ENCODE measurements at regions of chr10 and their contacts with region 1.

Region 1: GRCh38 chr10:110864662-110865140 is 7.0 kb upstream of the PDCD4 start:
- DNase-seq: peak; percentile 65
- ATAC-seq: peak; percentile 69
- H3K4me3 Mint-ChIP-seq: peak overlapping the region; percentile 67
- H3K27ac Mint-ChIP-seq: peak overlapping the region; percentile 96
- H3K4me1 Mint-ChIP-seq: peaks cover 96% of the 10 kb centered on the region
- H3K27me3 Mint-ChIP-seq: no peaks in the 10 kb centered on the region
- CTCF ChIP-seq: no peak

Region 2: GRCh38 chr10:110774069-110775019 is 90.4 kb before region 1 on chr10:
- CTCF ChIA-PET with region 1: interaction called, 5 read pairs
- POLR2A ChIA-PET with region 1: interaction called, 5 read pairs
- intact Hi-C with region 1: loop called (anchors 5 kb)
- DNase-seq: peak; percentile 78
- ATAC-seq: peak; percentile 91
- H3K4me3 Mint-ChIP-seq: peak overlapping the region; percentile 50
- H3K27ac Mint-ChIP-seq: peak overlapping the region; percentile 96
- H3K4me1 Mint-ChIP-seq: peaks cover 78% of the 10 kb centered on the region
- H3K27me3 Mint-ChIP-seq: no peaks in the 10 kb centered on the region
- CTCF ChIP-seq: no peak

Region 3: GRCh38 chr10:110951381-110951780 is 86.7 kb after region 1 on chr10:
- CTCF ChIA-PET with region 1: no interaction called
- POLR2A ChIA-PET with region 1: no interaction called
- intact Hi-C with region 1: no loop called
- DNase-seq: no peak
- ATAC-seq: no peak
- H3K4me3 Mint-ChIP-seq: no peak overlapping the region
- H3K27ac Mint-ChIP-seq: no peak overlapping the region
- H3K4me1 Mint-ChIP-seq: peaks cover 18% of the 10 kb centered on the region
- H3K27me3 Mint-ChIP-seq: no peaks in the 10 kb centered on the region
- CTCF ChIP-seq: no peak

Measured in activated CD8-positive, alpha-beta T cell treated with anti-CD3 and anti-CD28 coated beads for 36 hours (primary cell).